K562 (cell line): ENCODE measurements at regions of chr4 and their contacts with region 1.

Region 1: GRCh38 chr4:153655928-153656327 is 28.2 kb upstream of the TLR2 start:
- DNase-seq: no peak
- ATAC-seq: no peak
- H3K4me3 ChIP-seq: no peak overlapping the region
- H3K27ac ChIP-seq: no peak overlapping the region
- H3K4me1 ChIP-seq: no peaks in the 10 kb centered on the region
- H3K27me3 ChIP-seq: peaks cover 4 to 29% of the 10 kb centered on the region in 2 experiments; a peak in 3 of 5 replicates
- CTCF ChIP-seq: no peak
- EP300 ChIP-seq: no peak
- POLR2A ChIP-seq: no peak
- RAD21 ChIP-seq: no peak

Region 2: DNA sequence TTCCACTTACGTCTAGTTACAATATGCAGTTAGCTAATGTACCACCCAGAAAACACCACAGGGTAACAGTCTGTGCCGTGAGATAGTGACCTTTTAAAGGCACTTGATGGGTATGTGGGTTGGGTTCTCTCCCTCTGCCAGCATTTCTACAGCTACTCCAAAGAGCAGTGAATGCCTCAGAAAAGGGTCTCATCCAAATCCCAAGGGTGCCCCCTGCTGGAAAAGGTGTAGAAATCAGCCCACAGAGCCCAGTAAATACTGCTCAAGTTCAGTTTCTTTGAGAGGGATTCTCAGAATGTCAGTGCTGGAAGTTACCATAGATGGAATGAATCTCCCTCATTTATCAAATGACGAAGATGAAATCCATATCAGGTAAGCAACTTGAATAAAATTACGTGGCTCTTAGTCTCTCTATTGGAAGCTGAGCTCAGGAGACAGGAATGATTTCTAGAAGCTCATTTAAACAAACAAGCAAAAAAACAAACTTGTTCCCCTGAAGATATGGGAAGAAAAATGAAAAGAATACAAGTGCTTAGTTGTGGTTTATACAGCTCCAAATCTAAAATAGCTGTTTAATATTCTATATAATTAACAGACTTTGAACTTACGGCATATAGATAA is 94.4 kb after region 1 on chr4:
- CTCF ChIA-PET with region 1: no interaction called
- POLR2A ChIA-PET with region 1: no interaction called
- in situ Hi-C with region 1: no loop called
- intact Hi-C with region 1: loop called (anchors 5 kb)
- DNase-seq: peak; percentile 29 to 78 (median 48)
- ATAC-seq: peak; percentile 92
- H3K4me3 ChIP-seq: no peak overlapping the region
- H3K27ac ChIP-seq: no peak overlapping the region
- H3K4me1 ChIP-seq: no peaks in the 10 kb centered on the region
- H3K27me3 ChIP-seq: peaks cover 4 to 27% of the 10 kb centered on the region in 2 experiments
- CTCF ChIP-seq: peak; percentile 69 to 81 (median 78); a peak in 5 of 6 replicates
- EP300 ChIP-seq: no peak
- POLR2A ChIP-seq: no peak
- RAD21 ChIP-seq: peak; percentile 46 to 77

Region 3: DNA sequence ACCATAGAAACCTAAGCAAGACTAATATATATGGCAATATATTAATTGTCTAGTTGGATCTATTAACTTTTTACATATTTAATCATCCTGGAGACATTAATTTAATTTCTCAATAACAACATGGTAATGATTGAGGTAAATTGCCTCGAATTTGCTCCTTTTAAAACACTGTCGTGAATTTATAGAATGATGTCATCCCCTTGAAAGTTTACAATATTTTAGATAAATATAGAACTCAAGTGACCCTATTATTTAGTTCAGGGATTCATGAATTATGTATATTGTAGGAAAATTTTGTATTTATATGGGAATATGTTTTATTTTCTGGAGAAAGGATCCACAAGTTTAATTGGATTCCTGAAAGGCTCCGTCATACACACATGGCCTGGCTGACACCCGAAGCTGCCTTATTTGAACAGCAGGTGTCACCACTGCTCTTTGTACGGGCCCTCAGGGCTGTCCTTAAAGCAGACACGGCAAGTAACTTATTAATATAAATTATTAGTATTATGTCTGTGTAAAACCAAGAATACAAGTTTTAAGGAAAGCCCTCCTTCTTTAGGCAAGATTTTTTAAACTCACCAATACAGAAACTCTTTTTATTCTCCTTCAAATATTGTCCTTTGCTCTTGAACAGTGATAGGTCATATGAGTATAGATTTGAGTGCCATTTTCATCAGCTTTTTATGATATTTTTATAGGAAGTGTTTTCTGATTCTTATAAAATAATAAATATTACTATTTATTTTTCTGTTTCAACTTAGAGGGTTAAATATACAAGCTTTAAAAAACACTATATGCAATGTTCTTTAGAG is 896.2 kb after region 1 on chr4:
- CTCF ChIA-PET with region 1: no interaction called
- POLR2A ChIA-PET with region 1: no interaction called
- in situ Hi-C with region 1: no loop called
- intact Hi-C with region 1: no loop called
- DNase-seq: peak; percentile 62 to 85 (median 70)
- ATAC-seq: peak; percentile 76
- H3K4me3 ChIP-seq: no peak overlapping the region
- H3K27ac ChIP-seq: 0 out of 3 replicates have a peak overlapping the region, but pooled peaks have one; percentile 18
- H3K4me1 ChIP-seq: peaks cover 0 to 7% of the 10 kb centered on the region in 2 experiments; a peak in 1 of 5 replicates
- H3K27me3 ChIP-seq: no peaks in the 10 kb centered on the region
- CTCF ChIP-seq: peak; percentile 80 to 87 (median 81)
- EP300 ChIP-seq: no peak
- POLR2A ChIP-seq: no peak
- RAD21 ChIP-seq: peak; percentile 77 to 83